Activated B cell treated with CpG ODN at 0.5 μM for 24 hours (primary cell): ENCODE measurements at regions of chr9 and their contacts with region 1.

Region 1: GRCh38 chr9:37485389-37486219 is at the start of gene POLR1E:
- DNase-seq: peak; percentile 99
- ATAC-seq: peak; percentile 98
- H3K4me3 Mint-ChIP-seq: peak within 1 kb of the TSS; percentile 92
- H3K27ac Mint-ChIP-seq: peak within 1 kb of the TSS; percentile 85
- H3K4me1 Mint-ChIP-seq: peaks cover 31% of the 10 kb centered on the region
- H3K27me3 Mint-ChIP-seq: no peaks in the 10 kb centered on the region
- CTCF ChIP-seq: no peak
- total RNA-seq, gene POLR1E: 45.4 and 46.3 TPM in 2 replicates

Region 2: DNA sequence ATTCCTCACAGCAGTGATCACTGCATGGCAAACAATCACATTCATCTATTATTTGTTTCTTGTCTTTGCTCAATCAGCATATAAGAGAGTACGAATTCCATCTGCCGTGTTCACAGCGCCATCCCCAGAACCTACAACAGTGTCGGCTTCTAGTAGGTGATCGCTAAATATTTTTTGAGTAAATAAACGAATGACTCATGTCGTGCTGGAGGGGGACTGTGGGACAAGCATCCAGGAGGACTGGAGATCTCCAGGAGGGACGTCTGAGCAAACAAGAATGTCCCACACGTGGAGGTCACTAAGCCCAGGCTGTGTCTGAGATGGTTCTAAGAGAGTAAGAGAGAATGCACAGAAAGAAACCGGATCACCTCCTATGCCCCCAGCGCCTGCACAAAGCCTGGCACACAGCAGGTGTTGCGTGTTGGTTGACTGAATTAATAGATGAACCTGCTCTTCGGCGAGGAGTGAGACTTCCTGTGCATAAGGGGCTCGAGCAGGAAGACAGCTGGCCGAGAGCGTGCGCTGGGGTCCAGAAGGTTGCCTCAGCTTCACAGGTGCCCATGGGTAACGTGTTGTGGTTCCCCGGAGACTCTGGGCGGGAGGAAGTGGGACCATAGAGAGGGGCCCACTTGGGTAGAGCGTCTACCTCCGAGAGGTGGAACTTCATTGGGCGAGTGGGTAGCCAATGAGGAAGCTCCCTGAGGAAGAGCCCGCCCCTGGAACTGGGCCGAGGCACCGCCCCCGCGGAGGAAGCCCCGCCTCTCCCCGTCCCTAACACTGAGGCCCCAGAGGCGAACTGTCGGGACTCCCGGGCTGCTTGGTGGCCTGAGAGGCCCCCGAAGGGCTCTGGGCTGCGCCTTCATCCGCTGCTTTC is 719.9 kb before region 1 on chr9:
- CTCF ChIA-PET with region 1: no interaction called
- POLR2A ChIA-PET with region 1: no interaction called
- intact Hi-C with region 1: loop called (anchors 10 kb)
- DNase-seq: peak; percentile 89
- ATAC-seq: peak; percentile 98
- H3K4me3 Mint-ChIP-seq: no peak overlapping the region
- H3K27ac Mint-ChIP-seq: no peak overlapping the region
- H3K4me1 Mint-ChIP-seq: no peaks in the 10 kb centered on the region
- H3K27me3 Mint-ChIP-seq: peaks cover 17% of the 10 kb centered on the region
- CTCF ChIP-seq: no peak

Region 3: GRCh38 chr9:37465249-37466036 is 20.2 kb before region 1 on chr9 and contains the start of gene ZBTB5:
- CTCF ChIA-PET with region 1: no interaction called
- POLR2A ChIA-PET with region 1: interaction called, 25 read pairs
- intact Hi-C with region 1: loop called (anchors 1 kb)
- DNase-seq: peak; percentile 93
- ATAC-seq: peak; percentile 76
- H3K4me3 Mint-ChIP-seq: peak within 1 kb of the TSS; percentile 98
- H3K27ac Mint-ChIP-seq: peak within 1 kb of the TSS; percentile 98
- H3K4me1 Mint-ChIP-seq: peaks cover 36% of the 10 kb centered on the region
- H3K27me3 Mint-ChIP-seq: no peaks in the 10 kb centered on the region
- CTCF ChIP-seq: no peak
- total RNA-seq, gene ZBTB5: 26.5 and 28.1 TPM in 2 replicates

Region 4: DNA sequence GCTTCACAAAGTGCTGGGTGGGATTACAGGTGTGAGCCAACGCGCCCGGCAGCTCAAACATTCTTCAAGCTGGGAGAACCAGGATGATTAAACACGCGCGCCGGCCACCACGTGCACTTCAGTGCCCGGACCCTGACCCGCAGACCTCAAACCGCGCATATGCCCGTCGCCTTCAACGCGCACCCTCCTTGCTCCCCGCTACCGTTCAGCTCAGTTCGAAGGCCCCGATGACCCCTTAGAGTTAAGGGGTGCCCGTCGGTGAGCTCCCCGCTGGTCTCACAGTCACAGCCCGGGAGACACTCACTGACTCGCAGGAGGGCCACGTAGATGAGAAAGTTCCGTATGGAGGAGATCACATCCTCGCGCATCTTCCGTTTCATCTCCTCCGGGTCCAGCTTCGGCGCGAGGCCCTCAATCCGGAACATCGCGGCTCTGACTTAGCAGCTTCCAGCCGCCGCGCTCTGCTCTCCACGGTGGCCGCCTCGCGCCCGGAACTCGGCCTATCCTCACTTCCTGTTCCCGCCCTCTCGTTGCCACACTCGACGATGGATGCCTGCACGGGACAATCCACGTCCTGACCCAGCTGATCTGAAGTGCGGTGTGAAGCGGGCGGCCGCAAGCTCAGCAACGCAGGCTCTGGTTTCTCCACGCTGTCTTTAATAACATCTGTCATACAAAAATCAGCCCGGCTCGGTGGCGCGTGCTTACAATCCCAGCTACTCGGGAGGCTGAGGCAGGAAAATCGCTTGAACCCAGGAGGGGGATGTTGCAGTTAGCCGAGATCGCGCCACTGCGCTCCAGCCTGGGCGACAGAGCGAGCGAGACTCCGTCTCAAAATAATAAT is 106.7 kb after region 1 on chr9 and contains the start of gene TOMM5:
- CTCF ChIA-PET with region 1: no interaction called
- POLR2A ChIA-PET with region 1: interaction called, 12 read pairs
- intact Hi-C with region 1: loop called (anchors 2 kb)
- DNase-seq: peak; percentile 82
- ATAC-seq: peak; percentile 94
- H3K4me3 Mint-ChIP-seq: peak within 1 kb of the TSS; percentile 99
- H3K27ac Mint-ChIP-seq: peak within 1 kb of the TSS; percentile 96
- H3K4me1 Mint-ChIP-seq: peaks cover 47% of the 10 kb centered on the region
- H3K27me3 Mint-ChIP-seq: peaks cover 5% of the 10 kb centered on the region
- CTCF ChIP-seq: no peak
- total RNA-seq, gene TOMM5: 77.8 and 80.3 TPM in 2 replicates

Region 5: GRCh38 chr9:37903647-37904444 is 418.2 kb after region 1 on chr9 and contains the start of gene SLC25A51:
- CTCF ChIA-PET with region 1: no interaction called
- POLR2A ChIA-PET with region 1: no interaction called
- intact Hi-C with region 1: loop called (anchors 2 kb)
- DNase-seq: peak; percentile 98
- ATAC-seq: peak; percentile 82
- H3K4me3 Mint-ChIP-seq: peak within 1 kb of the TSS; percentile 85
- H3K27ac Mint-ChIP-seq: peak within 1 kb of the TSS; percentile 92
- H3K4me1 Mint-ChIP-seq: peaks cover 24% of the 10 kb centered on the region
- H3K27me3 Mint-ChIP-seq: no peaks in the 10 kb centered on the region
- CTCF ChIP-seq: no peak
- total RNA-seq, gene SLC25A51: 30.5 and 33.9 TPM in 2 replicates

Region 6: DNA sequence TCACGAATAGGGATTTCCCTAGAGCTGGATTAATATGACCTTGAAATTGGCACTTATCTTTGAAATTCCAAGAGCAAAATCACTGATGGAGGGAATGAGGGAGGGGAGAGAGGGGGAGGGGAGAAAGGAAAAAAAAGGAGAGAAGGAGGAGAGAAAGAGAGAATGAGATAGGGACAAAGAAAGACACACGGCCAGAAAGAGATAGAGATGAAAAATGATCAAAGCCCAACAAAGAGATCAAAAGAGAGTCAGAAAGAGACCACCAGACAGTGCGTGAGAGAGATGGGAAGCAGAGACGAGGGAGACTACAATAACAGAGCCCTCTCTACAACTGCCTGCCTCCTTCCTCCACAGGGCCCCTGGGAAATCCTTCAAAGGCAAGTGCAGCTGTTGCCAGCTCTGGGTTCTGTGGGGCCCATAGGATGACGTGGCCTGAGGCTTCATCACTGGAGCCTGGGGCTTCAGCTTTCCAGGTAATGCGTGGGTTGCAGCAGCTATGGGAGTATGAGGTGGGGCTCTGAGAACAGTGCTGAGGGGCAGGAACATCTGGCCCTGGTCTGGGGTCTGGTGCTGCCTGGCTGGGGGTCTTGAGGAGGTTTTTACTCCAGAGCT is 641.8 kb after region 1 on chr9:
- CTCF ChIA-PET with region 1: no interaction called
- POLR2A ChIA-PET with region 1: no interaction called
- intact Hi-C with region 1: no loop called
- DNase-seq: no peak
- ATAC-seq: no peak
- H3K4me3 Mint-ChIP-seq: no peak overlapping the region
- H3K27ac Mint-ChIP-seq: no peak overlapping the region
- H3K4me1 Mint-ChIP-seq: no peaks in the 10 kb centered on the region
- H3K27me3 Mint-ChIP-seq: peaks cover 10% of the 10 kb centered on the region
- CTCF ChIP-seq: no peak

Region 7: DNA sequence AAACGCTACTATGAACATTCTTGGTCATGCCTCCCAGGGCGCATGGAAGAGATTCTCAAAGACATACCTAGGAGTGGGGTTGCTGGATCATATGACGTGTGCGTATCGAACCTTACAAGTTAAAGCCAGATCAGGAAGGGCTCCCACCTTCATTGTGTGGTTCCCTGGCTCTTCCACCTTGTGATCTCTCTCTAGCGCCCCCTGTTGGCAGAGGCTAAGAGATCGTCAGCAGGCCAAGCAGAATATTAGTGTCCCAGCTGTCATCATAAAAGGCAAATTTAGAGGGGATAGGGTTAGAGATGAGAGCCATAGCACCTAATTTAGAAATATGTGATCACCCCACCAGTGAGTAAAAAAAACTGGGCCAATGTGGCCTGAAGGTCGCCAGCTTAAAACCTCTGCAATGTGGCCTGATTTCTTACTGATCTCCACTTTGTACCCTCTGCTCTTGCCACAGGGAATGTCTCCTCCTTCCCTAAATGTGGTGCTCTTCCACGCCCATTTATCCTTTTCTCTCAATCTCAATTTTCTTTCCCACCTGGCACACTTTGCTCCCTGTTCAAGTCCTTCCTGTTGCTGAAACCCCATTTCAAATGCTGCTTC is 675.1 kb after region 1 on chr9:
- CTCF ChIA-PET with region 1: no interaction called
- POLR2A ChIA-PET with region 1: no interaction called
- intact Hi-C with region 1: loop called (anchors 5 kb)
- DNase-seq: peak; percentile 25
- ATAC-seq: no peak
- H3K4me3 Mint-ChIP-seq: no peak overlapping the region
- H3K27ac Mint-ChIP-seq: no peak overlapping the region
- H3K4me1 Mint-ChIP-seq: no peaks in the 10 kb centered on the region
- H3K27me3 Mint-ChIP-seq: peaks cover 10% of the 10 kb centered on the region
- CTCF ChIP-seq: peak; percentile 42